GM18951 (cell line): ENCODE measurements at regions of chr14 and their contacts with region 1.

Region 1: GRCh38 chr14:106599209-106599608 is 1072.8 kb downstream of the TMEM121 start:
- POLR2A ChIP-seq: no peak

Region 2: DNA sequence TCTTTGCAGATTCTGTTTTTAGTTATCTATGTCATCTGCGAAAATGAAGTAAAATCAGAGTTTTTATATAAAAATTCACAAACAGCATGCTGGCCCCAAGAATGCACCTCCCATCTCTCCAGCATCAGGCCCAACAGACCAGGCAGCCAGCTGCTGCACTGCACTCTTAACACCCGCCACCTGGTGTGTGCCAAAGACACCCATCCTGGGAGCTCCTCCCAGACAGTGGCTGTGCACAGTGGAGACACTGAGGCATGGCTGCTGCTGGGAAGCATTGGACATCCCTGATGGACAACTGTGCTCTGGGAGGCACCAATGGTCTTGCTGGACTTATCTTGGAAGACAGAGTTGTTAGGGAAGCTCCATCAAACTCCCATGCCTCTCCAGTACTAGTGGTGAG is 255.6 kb before region 1 on chr14:
- in situ Hi-C with region 1: no loop called
- POLR2A ChIP-seq: no peak

Region 3: GRCh38 chr14:106679776-106680175 is 80.6 kb after region 1 on chr14:
- in situ Hi-C with region 1: loop called (anchors 5 kb)
- POLR2A ChIP-seq: no peak